ENCODE measurements at regions of chr7 and their contacts with region 1.

Region 1: GRCh38 chr7:101846800-101847538 is 29.5 kb downstream of the CUX1 start:
- DNase-seq: no peak
- ATAC-seq: no peak
- H3K4me3 ChIP-seq: no peak overlapping the region
- H3K27ac ChIP-seq: no peak overlapping the region
- H3K4me1 ChIP-seq: no peaks in the 10 kb centered on the region
- H3K27me3 ChIP-seq: no peaks in the 10 kb centered on the region
- CTCF ChIP-seq: no peak
- EP300 ChIP-seq: no peak
- POLR2A ChIP-seq: no peak
- RAD21 ChIP-seq: no peak

Region 2: GRCh38 chr7:101743241-101743994 is 103.6 kb before region 1 on chr7:
- CTCF ChIA-PET with region 1: no interaction called
- POLR2A ChIA-PET with region 1: interaction called, 10 read pairs
- RAD21 ChIA-PET with region 1: no interaction called
- SMC1A ChIA-PET with region 1: no interaction called
- in situ Hi-C with region 1: no loop called
- intact Hi-C with region 1: no loop called
- DNase-seq: no peak
- ATAC-seq: peak; percentile 57
- H3K4me3 ChIP-seq: peak overlapping the region; percentile 79
- H3K27ac ChIP-seq: peak overlapping the region; percentile 76
- H3K4me1 ChIP-seq: peaks cover 68% of the 10 kb centered on the region
- H3K27me3 ChIP-seq: no peaks in the 10 kb centered on the region
- CTCF ChIP-seq: peak; percentile 42 to 51 (median 49); a peak in 5 of 6 replicates
- EP300 ChIP-seq: no peak
- POLR2A ChIP-seq: no peak
- RAD21 ChIP-seq: peak; percentile 6; the same call in 1 of the 2 replicates

Region 3: DNA sequence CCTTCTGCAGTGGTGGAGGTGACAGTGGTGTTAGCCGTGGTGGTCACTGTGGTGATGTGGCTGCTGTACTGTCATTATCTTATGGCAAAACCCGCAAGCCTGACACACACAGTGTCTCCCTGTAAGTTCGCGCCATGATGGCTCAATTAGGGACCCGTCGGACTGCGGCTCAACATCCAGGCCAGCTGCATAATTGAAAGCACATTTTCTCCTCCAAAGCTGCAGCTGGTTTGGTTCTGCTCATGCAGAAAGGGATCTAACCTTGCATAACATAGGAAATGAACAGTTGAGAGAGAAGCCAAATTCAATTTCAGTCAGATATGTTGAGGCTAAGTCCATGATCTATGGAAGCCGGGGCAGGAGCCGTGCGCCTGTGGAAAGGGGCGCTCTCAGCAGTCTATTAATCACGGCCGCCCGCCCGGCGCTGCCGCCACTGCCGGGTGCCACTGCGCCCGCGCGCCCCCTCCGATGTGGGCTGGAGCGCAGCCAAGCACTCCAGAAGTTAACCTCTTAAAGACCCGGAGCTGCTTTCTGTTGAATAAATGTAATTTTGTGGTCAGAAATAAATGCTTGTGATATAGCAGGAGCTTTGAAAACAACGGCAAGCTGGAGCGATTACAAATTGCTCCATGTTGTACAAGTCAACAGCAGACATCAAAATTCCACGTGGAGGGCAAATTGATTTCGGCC is 198.2 kb after region 1 on chr7:
- CTCF ChIA-PET with region 1: no interaction called
- POLR2A ChIA-PET with region 1: no interaction called
- RAD21 ChIA-PET with region 1: no interaction called
- SMC1A ChIA-PET with region 1: no interaction called
- in situ Hi-C with region 1: no loop called
- intact Hi-C with region 1: no loop called
- DNase-seq: no peak
- ATAC-seq: no peak
- H3K4me3 ChIP-seq: no peak overlapping the region
- H3K27ac ChIP-seq: no peak overlapping the region
- H3K4me1 ChIP-seq: peaks cover 54% of the 10 kb centered on the region
- H3K27me3 ChIP-seq: no peaks in the 10 kb centered on the region
- CTCF ChIP-seq: no peak
- EP300 ChIP-seq: no peak
- POLR2A ChIP-seq: no peak
- RAD21 ChIP-seq: no peak

Region 4: GRCh38 chr7:102236592-102237287 is 389.8 kb after region 1 on chr7:
- CTCF ChIA-PET with region 1: no interaction called
- POLR2A ChIA-PET with region 1: no interaction called
- RAD21 ChIA-PET with region 1: no interaction called
- SMC1A ChIA-PET with region 1: no interaction called
- in situ Hi-C with region 1: no loop called
- intact Hi-C with region 1: no loop called
- DNase-seq: no peak
- ATAC-seq: peak; percentile 91
- H3K4me3 ChIP-seq: no peak overlapping the region
- H3K27ac ChIP-seq: no peak overlapping the region
- H3K4me1 ChIP-seq: peaks cover 8% of the 10 kb centered on the region
- H3K27me3 ChIP-seq: no peaks in the 10 kb centered on the region
- CTCF ChIP-seq: peak; percentile 70 to 91 (median 77)
- EP300 ChIP-seq: no peak
- POLR2A ChIP-seq: no peak
- RAD21 ChIP-seq: peak; percentile 98

Measured in GM12878 (cell line).